ENCODE measurements at regions of chr9 and their contacts with region 1.

Region 1: GRCh38 chr9:31100311-31100710 is 1284.1 kb upstream of the ACO1 start:
- DNase-seq: no peak
- ATAC-seq: no peak
- H3K4me3 ChIP-seq: no peak overlapping the region
- H3K4me3 Mint-ChIP-seq: no peak overlapping the region
- H3K27ac ChIP-seq: no peak overlapping the region
- H3K27ac Mint-ChIP-seq: no peak overlapping the region
- H3K4me1 ChIP-seq: no peaks in the 10 kb centered on the region
- H3K4me1 Mint-ChIP-seq: no peaks in the 10 kb centered on the region
- H3K27me3 ChIP-seq: no peaks in the 10 kb centered on the region
- H3K27me3 Mint-ChIP-seq: peaks cover 2% of the 10 kb centered on the region
- CTCF ChIP-seq: no peak

Region 2: DNA sequence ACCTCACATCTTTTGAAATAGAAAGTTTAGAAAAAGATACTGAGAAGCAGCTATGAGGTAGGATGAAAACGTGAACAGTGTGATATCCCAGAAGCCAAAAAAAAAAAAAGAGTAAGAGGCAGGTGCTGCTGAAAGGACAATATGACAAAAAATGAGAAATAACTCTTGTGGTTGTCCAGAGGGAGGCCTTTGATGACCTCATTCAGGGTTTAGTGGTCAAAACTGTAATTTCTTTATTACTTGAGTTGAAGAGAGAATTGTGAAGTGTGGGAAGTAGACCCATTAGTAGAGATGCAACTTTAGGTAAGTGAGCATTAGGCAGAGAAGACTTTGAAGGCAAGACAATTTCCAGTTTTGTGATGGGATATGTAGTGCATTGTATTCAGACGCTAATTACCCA is 22.1 kb before region 1 on chr9:
- CTCF ChIA-PET with region 1: no interaction called
- POLR2A ChIA-PET with region 1: no interaction called
- intact Hi-C with region 1: loop called in 1 of 2 experiments (anchors 2 kb)
- DNase-seq: no peak
- ATAC-seq: no peak
- H3K4me3 ChIP-seq: no peak overlapping the region
- H3K4me3 Mint-ChIP-seq: no peak overlapping the region
- H3K27ac ChIP-seq: no peak overlapping the region
- H3K27ac Mint-ChIP-seq: no peak overlapping the region
- H3K4me1 ChIP-seq: no peaks in the 10 kb centered on the region
- H3K4me1 Mint-ChIP-seq: no peaks in the 10 kb centered on the region
- H3K27me3 ChIP-seq: no peaks in the 10 kb centered on the region
- H3K27me3 Mint-ChIP-seq: no peaks in the 10 kb centered on the region
- CTCF ChIP-seq: no peak

Region 3: GRCh38 chr9:31112491-31112890 is 12.2 kb after region 1 on chr9:
- CTCF ChIA-PET with region 1: no interaction called
- POLR2A ChIA-PET with region 1: no interaction called
- intact Hi-C with region 1: no loop called
- DNase-seq: no peak
- ATAC-seq: no peak
- H3K4me3 ChIP-seq: no peak overlapping the region
- H3K4me3 Mint-ChIP-seq: no peak overlapping the region
- H3K27ac ChIP-seq: no peak overlapping the region
- H3K27ac Mint-ChIP-seq: no peak overlapping the region
- H3K4me1 ChIP-seq: no peaks in the 10 kb centered on the region
- H3K4me1 Mint-ChIP-seq: no peaks in the 10 kb centered on the region
- H3K27me3 ChIP-seq: no peaks in the 10 kb centered on the region
- H3K27me3 Mint-ChIP-seq: peaks cover 2% of the 10 kb centered on the region
- CTCF ChIP-seq: no peak

Measured in CD8-positive, alpha-beta T cell (primary cell).